ENCODE measurements at regions of chr14 and their contacts with region 1.

Region 1: DNA sequence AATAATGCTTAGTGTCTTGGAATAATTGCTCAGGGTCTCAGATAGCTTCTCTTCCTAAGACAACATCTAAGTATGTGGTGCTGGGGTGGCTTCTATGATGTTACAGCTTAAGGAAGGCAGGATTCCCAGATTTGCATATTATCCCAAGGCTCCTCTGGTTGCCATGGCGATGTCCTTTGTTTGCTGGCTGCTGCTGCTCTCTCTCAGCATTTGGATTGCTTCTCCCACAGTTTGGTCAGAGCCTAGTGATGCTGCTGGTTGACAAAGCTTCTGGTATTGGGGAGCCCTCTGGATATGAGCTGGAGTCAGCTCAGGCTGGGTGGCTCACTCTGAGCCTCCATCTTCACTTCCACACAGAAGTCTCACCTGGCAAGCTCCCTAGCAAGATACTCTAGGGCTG is 56.4 kb upstream of the FBXO33 start:
- DNase-seq: no peak
- H3K4me3 ChIP-seq: no peak overlapping the region
- H3K4me3 Mint-ChIP-seq: no peak overlapping the region
- H3K27ac ChIP-seq: no peak overlapping the region
- H3K27ac Mint-ChIP-seq: no peak overlapping the region
- H3K4me1 ChIP-seq: no peaks in the 10 kb centered on the region
- H3K4me1 Mint-ChIP-seq: no peaks in the 10 kb centered on the region
- H3K27me3 ChIP-seq: no peaks in the 10 kb centered on the region
- H3K27me3 Mint-ChIP-seq: no peaks in the 10 kb centered on the region

Region 2: DNA sequence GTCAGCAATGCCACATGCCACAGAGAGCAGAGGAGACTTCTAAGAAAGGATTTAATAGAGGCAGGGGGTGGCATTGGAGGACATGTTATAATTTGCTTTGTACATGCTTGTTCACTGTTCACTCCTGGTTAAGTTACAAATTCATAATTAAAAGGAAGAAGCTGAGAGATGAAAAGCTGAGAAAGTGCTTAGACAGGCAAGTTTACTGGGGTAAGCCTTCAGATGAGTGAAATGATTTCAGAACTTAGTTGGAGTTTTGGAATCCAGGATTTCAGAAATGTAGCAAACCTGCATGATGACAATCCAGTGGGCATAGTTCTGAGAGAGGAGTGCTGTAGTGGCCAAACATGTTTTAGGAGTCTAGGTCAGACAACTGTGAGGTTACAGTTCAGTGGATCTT is 10.9 kb after region 1 on chr14:
- CTCF ChIA-PET with region 1: interaction called, 13 read pairs
- POLR2A ChIA-PET with region 1: no interaction called
- intact Hi-C with region 1: no loop called
- DNase-seq: no peak
- H3K4me3 ChIP-seq: no peak overlapping the region
- H3K4me3 Mint-ChIP-seq: no peak overlapping the region
- H3K27ac ChIP-seq: no peak overlapping the region
- H3K27ac Mint-ChIP-seq: no peak overlapping the region
- H3K4me1 ChIP-seq: no peaks in the 10 kb centered on the region
- H3K4me1 Mint-ChIP-seq: no peaks in the 10 kb centered on the region
- H3K27me3 ChIP-seq: no peaks in the 10 kb centered on the region
- H3K27me3 Mint-ChIP-seq: no peaks in the 10 kb centered on the region

Measured in CD4-positive, alpha-beta memory T cell (primary cell).